ENCODE measurements at regions of chr5 and their contacts with region 1.

Region 1: DNA sequence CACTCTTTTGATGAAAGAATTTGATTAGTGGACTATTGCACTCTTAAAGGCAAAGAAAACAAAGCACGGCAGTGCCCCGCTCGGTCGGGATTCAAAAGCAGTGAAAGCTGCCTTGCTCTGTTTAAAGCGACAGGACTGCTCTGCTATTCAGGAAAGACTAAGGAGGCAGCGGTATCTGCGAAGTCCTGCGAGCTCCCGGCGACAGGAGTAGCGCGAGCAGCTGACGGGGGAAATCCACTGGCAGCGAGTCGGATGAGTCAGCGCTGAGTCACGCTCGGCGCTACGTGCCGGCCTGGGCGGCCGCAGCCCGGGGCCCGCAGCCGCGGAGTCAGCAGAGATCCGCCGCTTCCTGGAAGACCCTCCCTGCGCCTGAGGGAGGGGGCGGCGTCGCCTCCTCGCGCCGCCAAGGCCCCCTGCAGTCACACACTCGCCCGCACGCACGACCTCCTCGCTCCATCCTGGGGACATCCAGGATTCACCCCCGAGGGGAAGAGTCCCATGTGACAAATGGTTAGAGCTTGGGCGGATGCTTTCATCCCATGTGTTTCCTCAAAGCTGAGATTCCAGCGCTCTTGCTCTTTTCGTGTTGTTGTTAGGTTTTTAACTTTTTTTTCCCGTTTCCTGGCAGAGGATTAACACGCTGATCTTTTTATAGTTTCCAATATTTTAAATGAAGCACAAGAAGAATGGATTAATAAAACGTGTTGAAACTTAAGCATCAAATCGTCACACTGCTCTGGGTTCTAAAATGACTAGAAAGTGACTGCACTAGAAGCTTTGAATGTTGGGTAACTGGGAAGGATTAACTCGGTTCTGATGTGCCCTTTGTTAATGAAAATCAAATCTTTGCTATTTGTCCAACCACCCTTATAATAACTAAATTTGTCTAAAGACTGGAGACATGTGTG is 102.5 kb downstream of the ARRDC3 start:
- DNase-seq: peak; percentile 89
- CTCF ChIP-seq: no peak

Region 2: DNA sequence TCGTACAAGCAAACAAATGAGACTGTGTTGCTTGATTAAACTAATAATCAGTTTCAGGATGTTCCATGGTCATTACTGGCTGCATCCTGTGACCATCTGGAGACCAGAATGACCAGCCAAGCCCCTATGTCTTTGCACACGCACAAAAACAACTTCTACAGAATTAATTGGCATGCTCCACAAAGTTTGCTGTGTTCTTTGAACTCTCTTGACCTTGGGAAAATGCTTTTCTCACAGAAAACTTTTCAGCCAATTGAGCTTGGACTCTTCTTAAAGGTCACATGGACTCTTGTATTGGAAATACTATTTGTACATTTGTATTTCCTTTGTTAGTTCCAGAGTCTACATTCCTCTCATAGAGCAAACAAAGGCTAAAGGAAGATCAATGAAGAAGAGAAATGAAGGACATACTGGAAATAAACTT is 45.3 kb before region 1 on chr5:
- CTCF ChIA-PET with region 1: no interaction called
- POLR2A ChIA-PET with region 1: no interaction called
- DNase-seq: no peak
- CTCF ChIP-seq: no peak

Region 3: GRCh38 chr5:91245871-91246270 is 34.7 kb before region 1 on chr5:
- CTCF ChIA-PET with region 1: no interaction called
- POLR2A ChIA-PET with region 1: no interaction called
- DNase-seq: no peak
- CTCF ChIP-seq: peak; percentile 15

Region 4: GRCh38 chr5:91293131-91293530 is 12.5 kb after region 1 on chr5:
- CTCF ChIA-PET with region 1: interaction called, 18 read pairs
- POLR2A ChIA-PET with region 1: no interaction called
- DNase-seq: no peak
- CTCF ChIP-seq: no peak

Region 5: GRCh38 chr5:91311697-91312501 is 31.3 kb after region 1 on chr5:
- CTCF ChIA-PET with region 1: no interaction called
- POLR2A ChIA-PET with region 1: no interaction called
- DNase-seq: peak; percentile 56
- CTCF ChIP-seq: no peak